ENCODE measurements at regions of chr1 and their contacts with region 1.

Region 1: DNA sequence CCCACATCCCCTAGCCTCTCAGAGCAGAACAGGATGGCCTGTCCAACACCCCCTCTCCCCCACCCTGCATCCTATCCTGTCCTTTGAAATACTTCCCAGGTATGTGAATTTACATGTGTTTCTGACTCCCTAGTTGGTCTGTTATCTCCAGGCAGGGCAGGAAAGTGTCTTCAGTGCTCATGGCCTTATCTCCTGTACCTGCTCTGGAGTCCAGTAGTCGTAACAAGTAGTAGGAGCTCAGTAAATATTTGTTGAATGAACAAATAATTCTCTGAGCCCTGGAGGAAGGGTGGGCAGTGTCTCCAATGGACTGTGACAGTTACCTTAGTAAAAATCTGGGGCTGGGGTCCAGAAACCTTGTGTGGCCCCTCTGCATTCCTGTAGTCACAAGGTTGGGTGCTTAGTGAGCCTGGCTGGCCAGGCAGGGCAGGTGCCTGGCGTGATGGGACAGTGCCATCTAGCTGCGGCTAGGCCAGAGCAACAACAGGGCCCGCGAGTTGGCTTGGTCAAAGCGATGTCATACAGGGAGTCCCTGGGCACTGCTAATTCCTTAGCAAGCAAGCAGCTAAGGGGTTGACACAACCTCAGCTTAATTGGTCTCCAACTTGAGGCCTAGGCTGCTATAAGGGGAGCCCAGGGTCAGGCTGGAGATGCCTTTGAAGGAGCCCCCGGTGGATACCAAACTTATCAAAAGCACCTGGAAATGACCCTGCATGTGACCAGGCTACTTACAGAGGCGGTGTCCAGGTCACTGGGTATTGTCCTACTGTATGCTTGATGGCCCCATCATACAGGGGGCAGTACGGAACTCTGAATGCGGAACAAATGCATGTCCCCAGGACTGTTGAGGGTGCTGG is 89.0 kb upstream of the PPM1J start:
- ATAC-seq: peak; percentile 98 to 100 (median 99)
- H3K4me3 ChIP-seq: no peak overlapping the region
- H3K27ac ChIP-seq: no peak overlapping the region
- H3K4me1 ChIP-seq: no peaks in the 10 kb centered on the region

Region 2: GRCh38 chr1:112605633-112606327 is 198.4 kb before region 1 on chr1:
- in situ Hi-C with region 1: no loop called
- ATAC-seq: no peak
- H3K4me3 ChIP-seq: no peak overlapping the region
- H3K27ac ChIP-seq: no peak overlapping the region
- H3K4me1 ChIP-seq: no peaks in the 10 kb centered on the region

Region 3: DNA sequence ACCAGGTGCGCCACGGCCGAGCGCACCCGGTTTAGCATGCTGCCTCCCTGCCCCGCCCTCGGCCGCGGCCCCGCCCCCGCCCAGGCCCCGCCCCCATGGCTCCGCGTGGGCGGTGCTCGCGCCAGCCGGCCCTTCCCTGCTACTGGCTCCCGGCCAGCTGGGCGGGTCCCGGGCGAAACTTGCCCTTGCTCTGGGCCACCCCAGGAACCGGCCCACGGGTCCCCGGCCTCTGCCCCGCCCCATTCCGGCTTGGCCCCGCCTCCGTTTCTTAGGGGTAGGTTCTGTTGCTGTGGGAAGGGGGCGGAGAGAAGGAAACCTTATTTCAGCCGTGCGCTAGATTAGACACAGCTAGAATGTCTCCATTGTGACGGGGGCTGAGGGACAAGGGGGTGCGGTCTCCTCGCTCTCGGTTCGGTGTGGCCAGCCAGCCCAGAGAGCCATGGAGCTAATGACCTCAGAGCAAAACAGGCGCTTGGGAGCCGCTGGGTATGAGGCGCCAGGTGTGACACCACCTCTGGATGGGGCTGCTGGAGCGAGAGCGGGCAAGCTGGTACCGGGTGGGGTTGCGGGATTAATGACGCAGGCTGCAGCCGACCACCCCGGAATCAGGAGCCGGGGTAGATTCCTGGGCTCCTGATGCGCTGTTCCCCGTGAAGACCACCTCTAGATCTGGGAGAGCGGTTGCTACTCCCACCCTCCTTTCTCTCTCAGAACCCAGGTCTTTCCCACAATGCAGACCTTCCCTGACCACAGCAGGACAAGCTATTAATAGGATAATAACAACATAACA is 88.7 kb before region 1 on chr1 and contains the start of gene PPM1J:
- in situ Hi-C with region 1: loop called in 4 of 9 experiments (anchors 5 to 10 kb)
- ATAC-seq: peak; percentile 72 to 90 (median 82)
- H3K4me3 ChIP-seq: peak within 1 kb of the TSS; percentile 42 to 54 (median 48)
- H3K27ac ChIP-seq: no peak within 1 kb of the TSS
- H3K4me1 ChIP-seq: peaks cover 0 to 5% of the 10 kb centered on the region in 2 donors
- total RNA-seq, gene PPM1J: 0.36 to 2.2 (median 0.87) TPM

Region 4: DNA sequence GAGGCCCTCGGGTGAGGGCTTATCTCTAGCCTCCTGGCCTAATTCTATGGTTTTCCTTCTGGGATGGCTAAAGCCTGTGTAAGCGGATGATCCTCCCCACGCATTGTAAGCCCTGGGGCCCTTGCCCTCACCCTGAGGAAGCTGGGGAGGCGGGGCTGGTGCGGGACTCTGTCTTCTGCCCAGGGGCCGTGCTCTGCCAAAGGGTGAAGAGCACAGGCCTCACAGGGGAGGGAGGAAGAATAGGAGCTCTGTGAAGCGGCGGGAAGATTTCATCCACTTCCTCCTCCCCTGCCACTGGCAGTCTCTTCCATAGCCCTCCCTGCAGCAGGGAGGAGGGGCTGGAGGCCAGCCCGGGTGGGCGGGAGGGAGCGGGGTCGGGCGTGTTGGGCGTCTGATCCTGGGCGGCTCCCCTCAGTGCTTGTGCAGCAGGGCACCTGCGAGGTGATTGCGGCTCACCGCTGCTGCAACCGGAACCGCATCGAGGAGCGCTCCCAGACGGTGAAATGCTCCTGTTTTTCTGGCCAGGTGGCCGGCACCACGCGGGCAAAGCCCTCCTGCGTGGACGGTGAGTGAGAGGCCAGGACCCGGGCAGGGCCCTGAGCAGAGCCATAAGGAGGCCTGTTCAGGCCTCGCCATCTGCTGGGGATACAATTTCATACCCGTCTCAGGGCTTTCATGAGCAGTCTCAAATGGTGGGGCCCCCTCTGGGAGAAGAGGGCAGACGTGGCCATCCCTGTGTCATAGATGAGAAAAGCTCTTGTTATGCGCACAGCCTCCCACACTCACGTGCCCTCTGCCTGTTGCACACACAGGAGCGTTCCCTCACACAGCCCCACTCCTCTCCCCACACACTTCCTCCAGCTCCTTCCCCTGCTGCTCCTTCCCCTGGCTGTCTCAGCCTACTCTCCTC is 81.3 kb before region 1 on chr1:
- in situ Hi-C with region 1: loop called in 4 of 9 experiments (anchors 5 to 10 kb)
- ATAC-seq: peak; percentile 50 to 88 (median 80)
- H3K4me3 ChIP-seq: peak overlapping the region in 1 of 5 donors; percentile 13
- H3K27ac ChIP-seq: peak overlapping the region; percentile 47 to 73
- H3K4me1 ChIP-seq: peaks cover 14 to 23% of the 10 kb centered on the region in 2 donors

Region 5: DNA sequence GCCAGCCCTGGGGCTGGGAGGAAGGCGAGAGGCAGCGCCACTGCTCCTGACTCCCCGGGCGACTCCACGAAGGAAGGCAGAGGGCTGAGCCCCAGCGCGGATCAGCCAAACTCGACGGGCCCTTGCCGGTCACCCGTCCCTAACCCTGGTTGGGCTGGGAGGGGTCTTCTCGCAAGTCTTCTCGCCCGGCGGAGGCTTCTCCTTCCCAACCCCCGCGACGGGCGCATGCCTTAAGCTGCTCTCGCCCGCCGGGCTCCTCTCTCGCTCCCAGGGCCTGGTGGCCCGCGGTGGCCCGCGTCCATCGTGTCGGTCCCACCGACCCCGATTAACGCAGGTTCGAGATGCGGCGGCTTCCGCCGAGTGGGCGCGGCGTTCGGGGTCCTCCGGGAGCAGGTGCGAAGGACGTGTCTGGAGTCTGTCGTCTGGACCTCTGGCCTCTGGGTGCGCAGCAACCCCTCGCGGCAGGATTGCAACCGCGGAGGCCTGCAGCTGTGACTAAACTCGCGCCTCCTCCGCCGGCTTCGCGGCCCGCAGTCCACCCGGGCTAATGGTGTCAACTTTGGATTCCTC is 60.0 kb before region 1 on chr1:
- in situ Hi-C with region 1: no loop called
- ATAC-seq: peak in 4 of 8 experiments; percentile 19 to 93 (median 88)
- H3K4me3 ChIP-seq: no peak overlapping the region
- H3K27ac ChIP-seq: no peak overlapping the region
- H3K4me1 ChIP-seq: no peaks in the 10 kb centered on the region

Region 6: GRCh38 chr1:113042285-113043143 is 238.4 kb after region 1 on chr1:
- in situ Hi-C with region 1: loop called in 1 of 9 experiments (anchors 25 kb)
- ATAC-seq: peak; percentile 90 to 96 (median 92)
- H3K4me3 ChIP-seq: no peak overlapping the region
- H3K27ac ChIP-seq: peak overlapping the region; percentile 52 to 79
- H3K4me1 ChIP-seq: peaks cover 20 to 29% of the 10 kb centered on the region in 2 donors